ENCODE measurements at regions of chr12 and their contacts with region 1.

Region 1: DNA sequence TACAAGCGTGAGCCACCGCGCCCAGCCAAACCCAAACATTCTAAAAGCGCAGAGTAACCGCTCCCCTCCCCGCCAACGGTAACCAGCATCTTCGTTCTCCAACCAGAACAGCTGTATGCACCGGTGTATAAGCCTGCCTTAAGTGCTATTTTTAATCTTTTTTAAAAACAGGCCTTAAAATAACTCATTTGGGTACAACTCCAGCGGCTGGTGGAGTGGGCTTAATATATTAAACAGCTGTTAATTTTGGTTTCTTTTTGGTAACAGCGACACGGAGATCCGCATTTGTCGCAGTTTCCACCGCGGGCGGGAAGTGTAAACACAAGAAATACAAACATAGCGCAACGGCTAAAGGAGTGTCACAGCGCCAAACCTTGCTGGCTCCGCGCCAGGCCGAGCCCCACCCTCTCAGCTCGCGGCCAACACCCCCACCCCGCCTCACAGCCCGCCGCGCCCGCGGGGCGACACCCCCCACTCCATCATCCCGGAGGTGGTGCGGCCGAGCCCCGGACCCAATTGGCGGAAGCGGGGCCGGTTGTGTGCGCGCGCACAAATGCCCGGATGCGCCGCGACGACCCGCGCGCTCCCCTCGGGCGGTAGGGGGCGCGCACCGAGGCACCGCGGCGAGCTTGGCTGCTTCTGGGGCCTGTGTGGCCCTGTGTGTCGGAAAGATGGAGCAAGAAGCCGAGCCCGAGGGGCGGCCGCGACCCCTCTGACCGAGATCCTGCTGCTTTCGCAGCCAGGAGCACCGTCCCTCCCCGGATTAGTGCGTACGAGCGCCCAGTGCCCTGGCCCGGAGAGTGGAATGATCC is at the start of gene MDM2:
- H3K4me3 Mint-ChIP-seq: peak within 1 kb of the TSS; percentile 89
- H3K27ac Mint-ChIP-seq: peak within 1 kb of the TSS; percentile 99
- H3K4me1 Mint-ChIP-seq: peaks cover 20% of the 10 kb centered on the region
- H3K27me3 Mint-ChIP-seq: no peaks in the 10 kb centered on the region

Region 2: DNA sequence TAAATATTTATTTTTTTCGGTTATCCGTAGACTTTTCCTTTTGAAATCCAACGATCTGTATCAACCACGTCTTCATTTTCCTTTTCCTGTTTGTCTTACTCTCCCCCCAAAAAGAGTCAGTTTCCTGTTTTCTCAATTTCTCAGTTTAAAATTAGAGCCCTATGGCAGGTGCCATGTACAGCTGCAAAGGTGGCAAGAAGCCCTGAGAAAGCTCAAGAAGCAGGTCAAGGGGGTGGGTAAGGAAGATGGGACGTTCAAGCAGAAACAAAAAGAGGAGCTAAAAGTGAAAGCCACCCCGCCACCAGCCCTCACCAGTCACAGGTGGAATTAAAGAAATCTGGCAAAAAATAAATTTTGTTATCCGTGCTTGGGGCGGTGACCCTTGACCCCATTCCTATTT is 35.1 kb before region 1 on chr12:
- intact Hi-C with region 1: loop called (anchors 5 kb)
- H3K4me3 Mint-ChIP-seq: no peak overlapping the region
- H3K27ac Mint-ChIP-seq: no peak overlapping the region
- H3K4me1 Mint-ChIP-seq: peaks cover 6% of the 10 kb centered on the region
- H3K27me3 Mint-ChIP-seq: no peaks in the 10 kb centered on the region

Region 3: DNA sequence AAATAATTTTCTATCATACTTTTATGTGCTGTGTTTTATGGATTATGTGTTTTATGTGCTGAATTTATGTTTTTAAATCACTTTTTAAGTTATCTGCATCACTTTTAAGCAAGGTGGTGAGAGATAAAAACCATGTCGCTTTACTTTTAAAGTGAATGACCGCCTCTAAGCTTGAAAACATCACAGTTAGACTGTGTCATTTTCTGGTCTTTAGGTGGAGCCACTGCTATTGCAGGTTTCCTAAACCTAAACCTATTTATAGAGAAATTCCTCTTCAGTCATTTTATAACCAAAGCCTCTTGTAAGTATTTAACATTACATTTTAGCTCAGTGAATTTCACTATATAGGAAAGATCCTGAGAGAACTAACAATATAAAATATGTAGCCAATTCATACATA is 20.9 kb before region 1 on chr12:
- intact Hi-C with region 1: loop called (anchors 1 kb)
- H3K4me3 Mint-ChIP-seq: no peak overlapping the region
- H3K27ac Mint-ChIP-seq: peak overlapping the region; percentile 96
- H3K4me1 Mint-ChIP-seq: peaks cover 50% of the 10 kb centered on the region
- H3K27me3 Mint-ChIP-seq: no peaks in the 10 kb centered on the region

Region 4: DNA sequence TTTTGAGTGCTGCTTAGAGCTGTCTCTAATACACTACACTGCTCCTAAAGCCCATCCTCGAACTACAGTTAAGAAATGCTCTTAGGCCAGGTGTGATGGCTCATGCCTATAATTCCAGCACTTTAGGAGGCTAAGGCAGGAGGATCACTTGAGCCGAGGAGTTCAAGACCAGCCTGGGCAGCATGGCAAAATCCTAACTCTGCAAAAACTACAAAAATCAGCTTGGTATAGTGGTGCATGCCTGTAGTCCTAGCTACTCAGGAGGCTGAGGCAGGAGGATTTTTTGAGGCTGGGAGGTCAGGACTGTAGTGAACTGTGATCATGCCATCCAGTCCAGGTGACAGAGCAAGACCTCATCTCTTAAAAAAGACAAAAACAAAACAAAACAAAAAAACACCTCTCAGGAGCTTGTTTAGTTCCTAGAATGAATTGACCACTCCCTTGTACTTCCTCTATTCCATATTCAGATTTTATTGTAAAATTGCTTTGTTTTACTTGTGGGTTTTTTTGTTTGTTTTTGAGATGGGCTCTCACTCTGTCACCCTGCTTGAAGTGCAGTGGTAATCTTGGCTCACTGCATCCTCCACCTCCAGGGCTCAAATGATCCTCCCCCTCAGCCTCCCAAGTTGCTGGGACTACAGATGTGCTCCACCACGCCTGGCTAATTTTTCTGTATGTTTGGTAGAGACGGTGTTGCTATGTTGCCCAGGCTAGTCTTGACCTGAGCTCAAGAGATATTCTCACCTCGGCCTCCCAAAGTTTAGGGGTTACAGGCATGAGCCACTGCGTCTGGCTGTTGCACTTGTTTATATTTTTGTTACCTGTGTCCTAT is 13.8 kb after region 1 on chr12:
- intact Hi-C with region 1: no loop called
- H3K4me3 Mint-ChIP-seq: no peak overlapping the region
- H3K27ac Mint-ChIP-seq: peak overlapping the region; percentile 22
- H3K4me1 Mint-ChIP-seq: peaks cover 31% of the 10 kb centered on the region
- H3K27me3 Mint-ChIP-seq: no peaks in the 10 kb centered on the region